ENCODE measurements at regions of chr19 and their contacts with region 1.

Region 1: GRCh38 chr19:37583340-37583739 is 11.3 kb downstream of the ZNF571 start:
- DNase-seq: no peak
- H3K4me3 ChIP-seq: no peak overlapping the region
- H3K27ac ChIP-seq: no peak overlapping the region
- H3K4me1 ChIP-seq: no peaks in the 10 kb centered on the region
- H3K27me3 ChIP-seq: no peaks in the 10 kb centered on the region
- CTCF ChIP-seq: no peak
- EP300 ChIP-seq: no peak
- POLR2A ChIP-seq: no peak

Region 2: DNA sequence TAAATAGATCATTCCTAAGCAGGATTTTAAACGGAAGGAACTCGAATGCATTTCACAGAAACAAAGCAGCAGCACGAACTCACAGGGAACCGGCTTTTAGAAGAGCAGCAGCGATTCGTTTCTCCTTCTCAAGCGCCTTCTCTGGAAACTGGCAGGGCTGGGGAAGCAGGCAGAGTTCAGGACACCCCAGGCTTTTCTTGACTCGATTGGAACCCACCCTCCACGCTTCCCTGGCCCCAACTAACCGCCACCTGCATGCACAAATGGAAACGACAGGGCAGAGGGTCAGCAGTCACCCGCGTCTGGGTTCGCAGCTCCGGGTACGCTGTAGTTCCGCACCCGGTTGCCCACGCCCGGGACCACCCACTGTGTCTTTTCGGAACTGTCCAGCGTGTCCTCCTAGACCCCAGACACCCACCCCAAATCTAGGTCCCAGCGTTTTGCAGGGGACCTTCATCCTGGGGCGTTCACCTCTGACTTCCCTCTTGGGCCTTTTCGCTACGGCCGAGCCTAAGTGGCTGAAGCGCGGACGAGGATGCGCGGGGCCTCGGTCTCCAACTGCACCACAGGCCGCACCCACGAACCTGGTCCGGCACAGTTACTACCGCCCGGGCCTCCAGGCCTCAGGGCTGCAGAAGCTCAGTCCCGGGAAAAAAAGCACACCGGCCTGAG is 71.4 kb after region 1 on chr19:
- intact Hi-C with region 1: loop called in 1 of 4 experiments (anchors 5 kb)
- DNase-seq: peak in 1 of 5 donors; percentile 47
- H3K4me3 ChIP-seq: peak overlapping the region; percentile 82
- H3K27ac ChIP-seq: peak overlapping the region; percentile 82
- H3K4me1 ChIP-seq: peaks cover 2% of the 10 kb centered on the region
- H3K27me3 ChIP-seq: no peaks in the 10 kb centered on the region
- CTCF ChIP-seq: no peak
- EP300 ChIP-seq: no peak
- POLR2A ChIP-seq: no peak

Region 3: GRCh38 chr19:37691881-37692504 is 108.7 kb after region 1 on chr19:
- intact Hi-C with region 1: no loop called
- DNase-seq: peak; percentile 84 to 90 (median 87)
- H3K4me3 ChIP-seq: peak overlapping the region; percentile 56
- H3K27ac ChIP-seq: peak overlapping the region; percentile 71 to 79
- H3K4me1 ChIP-seq: no peaks in the 10 kb centered on the region
- H3K27me3 ChIP-seq: no peaks in the 10 kb centered on the region
- CTCF ChIP-seq: no peak
- EP300 ChIP-seq: no peak
- POLR2A ChIP-seq: no peak